ENCODE measurements at regions of chr2 and their contacts with region 1.

Region 1: DNA sequence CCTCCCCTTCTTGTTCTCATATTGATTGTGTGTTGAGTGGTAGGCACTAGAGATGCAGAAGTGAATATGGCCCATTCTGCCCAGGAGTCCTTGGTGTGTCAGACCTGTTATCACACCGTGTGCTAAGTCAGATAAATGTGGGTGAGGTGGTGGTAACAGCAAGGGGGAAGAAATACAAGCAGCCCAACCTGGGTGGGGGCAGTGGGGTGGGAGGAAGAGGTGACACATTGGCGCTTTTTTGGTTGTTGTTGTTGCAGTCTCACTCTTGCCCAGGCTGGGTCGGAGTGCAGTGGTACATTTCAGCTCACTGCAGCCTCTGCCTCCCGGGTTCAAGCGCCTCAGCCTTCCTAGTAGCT is 12.8 kb downstream of the B3GNT2 start:
- DNase-seq: no peak
- ATAC-seq: peak; percentile 40
- H3K4me3 ChIP-seq: peak overlapping the region; percentile 31; the same call in 1 of the 2 replicates
- H3K27ac ChIP-seq: 0 out of 2 replicates have a peak overlapping the region, but pooled peaks have one; percentile 2
- H3K4me1 ChIP-seq: peaks cover 12% of the 10 kb centered on the region; the same call in 1 of the 2 replicates
- H3K27me3 ChIP-seq: no peaks in the 10 kb centered on the region
- CTCF ChIP-seq: no peak
- EP300 ChIP-seq: no peak
- POLR2A ChIP-seq: peak; percentile 23; the same call in 1 of the 2 replicates
- RAD21 ChIP-seq: no peak

Region 2: DNA sequence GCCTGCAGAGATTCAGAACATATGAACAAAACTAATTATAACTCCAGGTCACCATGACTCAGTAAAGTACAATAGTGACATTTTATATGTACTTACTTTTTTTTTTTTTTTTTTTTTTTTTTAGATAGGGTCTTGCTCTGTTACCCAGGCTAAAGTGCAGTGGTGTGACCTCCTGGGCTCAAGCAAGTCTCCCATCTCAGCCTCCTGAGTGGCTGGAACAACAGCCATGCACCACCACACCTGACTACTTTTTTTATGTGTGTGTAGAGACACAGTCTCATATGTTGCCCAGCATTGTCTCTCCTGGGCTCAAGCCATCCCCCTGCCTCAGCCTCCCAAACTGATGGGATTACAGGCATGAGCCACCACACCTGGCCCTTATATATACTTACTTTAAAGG is 143.5 kb before region 1 on chr2:
- CTCF ChIA-PET with region 1: no interaction called
- POLR2A ChIA-PET with region 1: interaction called, 10 read pairs
- RAD21 ChIA-PET with region 1: no interaction called
- SMC1A ChIA-PET with region 1: no interaction called
- in situ Hi-C with region 1: no loop called
- intact Hi-C with region 1: no loop called
- DNase-seq: no peak
- ATAC-seq: peak; percentile 56
- H3K4me3 ChIP-seq: peak overlapping the region; percentile 11; the same call in 1 of the 2 replicates
- H3K27ac ChIP-seq: peak overlapping the region; percentile 81
- H3K4me1 ChIP-seq: peaks cover 37% of the 10 kb centered on the region
- H3K27me3 ChIP-seq: no peaks in the 10 kb centered on the region
- CTCF ChIP-seq: no peak
- EP300 ChIP-seq: no peak
- POLR2A ChIP-seq: no peak
- RAD21 ChIP-seq: no peak

Region 3: GRCh38 chr2:62186156-62186905 is 22.4 kb before region 1 on chr2:
- CTCF ChIA-PET with region 1: no interaction called
- POLR2A ChIA-PET with region 1: no interaction called
- RAD21 ChIA-PET with region 1: no interaction called
- SMC1A ChIA-PET with region 1: no interaction called
- in situ Hi-C with region 1: no loop called
- intact Hi-C with region 1: no loop called
- DNase-seq: no peak
- ATAC-seq: no peak
- H3K4me3 ChIP-seq: no peak overlapping the region
- H3K27ac ChIP-seq: no peak overlapping the region
- H3K4me1 ChIP-seq: no peaks in the 10 kb centered on the region
- H3K27me3 ChIP-seq: no peaks in the 10 kb centered on the region
- CTCF ChIP-seq: no peak
- EP300 ChIP-seq: no peak
- POLR2A ChIP-seq: no peak
- RAD21 ChIP-seq: no peak

Region 4: DNA sequence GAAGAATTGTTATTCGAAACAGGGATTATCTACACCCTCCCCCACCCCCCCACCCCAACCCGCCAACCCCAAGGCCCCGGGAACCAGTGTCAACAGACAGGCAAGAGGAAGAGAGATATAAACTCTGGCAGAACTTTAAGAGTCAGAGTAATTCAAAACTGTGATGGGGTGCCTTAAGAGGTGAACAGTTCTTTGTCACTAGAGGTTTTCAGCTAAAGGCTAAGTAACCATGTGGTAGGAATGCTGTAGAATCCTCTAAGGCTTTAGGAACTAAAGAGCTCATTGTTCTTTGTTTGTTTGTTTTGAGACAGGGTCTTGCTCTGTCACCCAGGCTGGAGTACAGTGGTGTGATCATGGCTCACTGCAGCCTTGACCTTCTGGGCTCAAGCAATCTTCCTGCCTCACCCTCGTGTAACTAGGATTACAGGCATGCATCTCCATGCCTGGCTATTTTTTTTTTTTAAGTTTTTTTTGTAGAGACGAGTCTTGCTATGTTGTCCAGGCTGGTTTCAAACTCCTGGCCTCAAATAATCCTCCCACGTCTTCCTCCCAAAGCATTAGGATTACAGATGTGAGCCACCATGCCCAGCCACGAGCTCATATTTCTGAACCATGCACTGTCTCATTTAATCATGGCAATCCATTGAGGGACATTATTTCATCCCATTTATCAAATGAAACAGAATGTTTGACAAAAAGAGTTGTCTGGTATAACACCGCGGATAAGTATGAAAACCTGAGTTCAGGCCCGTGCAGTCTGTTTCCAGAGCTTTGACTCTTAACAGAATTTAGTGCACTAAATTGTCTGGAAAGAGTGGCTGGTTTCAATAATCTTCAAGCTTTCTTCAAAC is 318.0 kb after region 1 on chr2:
- CTCF ChIA-PET with region 1: no interaction called
- POLR2A ChIA-PET with region 1: no interaction called
- RAD21 ChIA-PET with region 1: no interaction called
- SMC1A ChIA-PET with region 1: no interaction called
- in situ Hi-C with region 1: no loop called
- intact Hi-C with region 1: no loop called
- DNase-seq: no peak
- ATAC-seq: no peak
- H3K4me3 ChIP-seq: no peak overlapping the region
- H3K27ac ChIP-seq: no peak overlapping the region
- H3K4me1 ChIP-seq: no peaks in the 10 kb centered on the region
- H3K27me3 ChIP-seq: no peaks in the 10 kb centered on the region; a peak in 1 of 4 replicates
- CTCF ChIP-seq: no peak
- EP300 ChIP-seq: no peak
- POLR2A ChIP-seq: no peak
- RAD21 ChIP-seq: no peak